ENCODE measurements at regions of chr2 and their contacts with region 1.

Region 1: GRCh38 chr2:205237524-205237923 is 444.8 kb upstream of the NRP2 start:
- DNase-seq: no peak
- ATAC-seq: no peak
- H3K4me3 ChIP-seq: no peak overlapping the region
- H3K4me3 Mint-ChIP-seq: no peak overlapping the region
- H3K27ac ChIP-seq: no peak overlapping the region
- H3K27ac Mint-ChIP-seq: no peak overlapping the region
- H3K4me1 ChIP-seq: no peaks in the 10 kb centered on the region
- H3K4me1 Mint-ChIP-seq: peaks cover 0 to 6% (median 5%) of the 10 kb centered on the region in 7 donors
- H3K27me3 ChIP-seq: no peaks in the 10 kb centered on the region
- H3K27me3 Mint-ChIP-seq: peaks cover 0 to 8% (median 0%) of the 10 kb centered on the region in 5 donors

Region 2: GRCh38 chr2:205066081-205066480 is 171.4 kb before region 1 on chr2:
- CTCF ChIA-PET with region 1: no interaction called
- POLR2A ChIA-PET with region 1: no interaction called
- intact Hi-C with region 1: no loop called
- DNase-seq: no peak
- ATAC-seq: no peak
- H3K4me3 ChIP-seq: no peak overlapping the region
- H3K4me3 Mint-ChIP-seq: no peak overlapping the region
- H3K27ac ChIP-seq: no peak overlapping the region
- H3K27ac Mint-ChIP-seq: no peak overlapping the region
- H3K4me1 ChIP-seq: no peaks in the 10 kb centered on the region
- H3K4me1 Mint-ChIP-seq: peaks cover 3 to 34% (median 14%) of the 10 kb centered on the region in 7 donors
- H3K27me3 ChIP-seq: no peaks in the 10 kb centered on the region
- H3K27me3 Mint-ChIP-seq: peaks cover 0 to 5% (median 0%) of the 10 kb centered on the region in 5 donors

Region 3: GRCh38 chr2:205218056-205218455 is 19.5 kb before region 1 on chr2:
- CTCF ChIA-PET with region 1: no interaction called
- POLR2A ChIA-PET with region 1: no interaction called
- intact Hi-C with region 1: loop called in 1 of 2 experiments (anchors 1 kb)
- DNase-seq: no peak
- ATAC-seq: no peak
- H3K4me3 ChIP-seq: no peak overlapping the region
- H3K4me3 Mint-ChIP-seq: no peak overlapping the region
- H3K27ac ChIP-seq: no peak overlapping the region
- H3K27ac Mint-ChIP-seq: no peak overlapping the region
- H3K4me1 ChIP-seq: no peaks in the 10 kb centered on the region
- H3K4me1 Mint-ChIP-seq: peaks cover 0 to 4% (median 0%) of the 10 kb centered on the region in 7 donors
- H3K27me3 ChIP-seq: no peaks in the 10 kb centered on the region
- H3K27me3 Mint-ChIP-seq: peaks cover 0 to 30% (median 0%) of the 10 kb centered on the region in 5 donors